ENCODE measurements at regions of chr3 and their contacts with region 1.

Region 1: DNA sequence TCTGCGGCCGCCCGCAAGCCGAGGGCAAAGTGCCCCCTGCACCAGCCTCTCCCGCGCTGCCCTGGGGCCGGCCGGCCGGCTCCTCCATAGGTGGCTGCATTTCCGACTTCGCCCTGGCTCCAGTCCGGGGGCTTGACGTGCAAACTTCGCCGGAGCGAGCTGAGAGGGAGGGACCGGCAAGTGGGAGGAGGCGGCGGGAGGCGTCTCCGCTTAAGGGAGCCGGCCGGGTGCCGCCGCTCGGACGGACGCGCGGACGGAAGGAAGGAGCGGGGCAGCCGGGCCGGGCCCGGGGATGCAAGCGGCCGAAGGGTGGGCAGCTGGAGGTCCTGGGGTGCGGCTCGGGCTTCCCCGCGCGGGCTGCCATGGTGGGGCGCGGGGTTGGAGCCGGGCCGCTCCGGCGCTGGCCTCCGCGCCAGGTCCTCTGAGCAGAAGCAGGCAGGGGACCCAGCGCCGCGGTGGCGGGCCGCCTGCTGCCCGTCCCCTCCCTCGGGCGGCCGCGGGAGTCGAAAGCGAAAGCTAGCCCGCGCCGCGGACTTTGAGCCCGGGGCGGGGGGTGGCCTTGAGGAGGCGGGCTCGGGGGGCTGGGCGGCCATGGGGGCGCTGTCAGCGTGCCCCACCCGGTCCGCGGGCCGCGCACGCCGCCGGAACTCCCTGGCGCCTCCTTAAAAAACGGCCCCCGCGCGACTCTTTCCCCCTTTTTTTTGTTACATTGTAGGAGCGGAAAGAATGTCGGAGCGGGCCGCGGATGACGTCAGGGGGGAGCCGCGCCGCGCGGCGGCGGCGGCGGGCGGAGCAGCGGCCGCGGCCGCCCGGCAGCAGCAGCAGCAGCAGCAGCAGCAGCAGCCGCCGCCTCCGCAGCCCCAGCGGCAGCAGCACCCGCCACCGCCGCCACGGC is at the start of gene SCAANT1:
- DNase-seq: peak; percentile 79
- ATAC-seq: peak; percentile 74
- H3K4me3 Mint-ChIP-seq: peak within 1 kb of the TSS; percentile 89
- H3K27ac Mint-ChIP-seq: peak within 1 kb of the TSS; percentile 92
- H3K4me1 Mint-ChIP-seq: peaks cover 47% of the 10 kb centered on the region
- H3K27me3 Mint-ChIP-seq: no peaks in the 10 kb centered on the region
- CTCF ChIP-seq: no peak
- total RNA-seq, gene SCAANT1: not detected in 2 replicates

Region 2: DNA sequence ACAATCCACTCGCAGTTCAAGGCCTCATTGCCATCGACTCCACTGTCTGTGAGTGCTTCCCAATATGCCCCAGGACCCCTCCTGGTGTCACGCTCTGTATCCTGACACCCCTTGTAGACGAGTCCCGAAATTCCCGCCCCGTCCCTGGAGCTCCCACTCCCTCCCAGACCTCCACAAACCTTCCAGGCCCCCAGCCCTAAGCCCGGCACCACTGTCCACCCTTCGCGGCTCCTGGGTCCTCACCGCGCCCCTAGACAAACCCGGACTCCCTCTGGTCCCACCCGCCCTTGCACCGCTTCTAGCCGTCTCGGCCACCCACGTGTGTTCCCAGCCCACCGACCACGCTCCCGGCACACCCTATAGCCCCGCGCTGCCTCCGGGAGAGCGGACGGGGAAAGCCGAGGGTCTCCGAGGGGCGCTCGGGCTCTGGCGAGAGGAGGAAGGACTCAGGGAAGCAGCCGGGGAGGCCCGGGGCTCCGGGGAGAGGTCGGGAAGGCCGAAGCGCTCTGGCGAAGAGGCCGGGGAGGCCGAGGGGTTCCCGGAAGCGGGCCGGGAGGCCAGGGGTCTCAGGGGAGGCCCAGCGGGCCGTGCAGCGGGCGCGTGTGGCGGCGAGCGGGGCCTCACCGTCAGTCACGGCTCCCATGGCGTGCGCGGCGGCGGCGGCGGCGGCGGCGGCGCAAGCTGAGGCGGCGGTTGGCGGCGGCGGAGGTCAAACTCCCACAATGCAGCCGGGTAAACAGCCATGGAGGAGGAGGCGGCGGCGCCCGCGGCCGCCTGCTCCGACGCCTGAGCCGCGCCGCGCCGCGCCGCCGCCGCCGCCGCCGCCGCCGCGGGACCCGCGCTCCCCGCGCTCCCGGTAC is 48.7 kb before region 1 on chr3 and contains the starts of genes ATXN7 and THOC7:
- CTCF ChIA-PET with region 1: no interaction called
- POLR2A ChIA-PET with region 1: interaction called, 5 read pairs
- intact Hi-C with region 1: loop called (anchors 1 kb)
- DNase-seq: peak; percentile 77
- ATAC-seq: peak; percentile 80
- H3K4me3 Mint-ChIP-seq: peak within 1 kb of the TSS; percentile 96
- H3K27ac Mint-ChIP-seq: peak within 1 kb of the TSS; percentile 94
- H3K4me1 Mint-ChIP-seq: peaks cover 50% of the 10 kb centered on the region
- H3K27me3 Mint-ChIP-seq: no peaks in the 10 kb centered on the region
- CTCF ChIP-seq: no peak
- total RNA-seq, gene ATXN7: 45.2 and 46.7 TPM in 2 replicates
- total RNA-seq, gene THOC7: 50.2 and 53.8 TPM in 2 replicates

Region 3: DNA sequence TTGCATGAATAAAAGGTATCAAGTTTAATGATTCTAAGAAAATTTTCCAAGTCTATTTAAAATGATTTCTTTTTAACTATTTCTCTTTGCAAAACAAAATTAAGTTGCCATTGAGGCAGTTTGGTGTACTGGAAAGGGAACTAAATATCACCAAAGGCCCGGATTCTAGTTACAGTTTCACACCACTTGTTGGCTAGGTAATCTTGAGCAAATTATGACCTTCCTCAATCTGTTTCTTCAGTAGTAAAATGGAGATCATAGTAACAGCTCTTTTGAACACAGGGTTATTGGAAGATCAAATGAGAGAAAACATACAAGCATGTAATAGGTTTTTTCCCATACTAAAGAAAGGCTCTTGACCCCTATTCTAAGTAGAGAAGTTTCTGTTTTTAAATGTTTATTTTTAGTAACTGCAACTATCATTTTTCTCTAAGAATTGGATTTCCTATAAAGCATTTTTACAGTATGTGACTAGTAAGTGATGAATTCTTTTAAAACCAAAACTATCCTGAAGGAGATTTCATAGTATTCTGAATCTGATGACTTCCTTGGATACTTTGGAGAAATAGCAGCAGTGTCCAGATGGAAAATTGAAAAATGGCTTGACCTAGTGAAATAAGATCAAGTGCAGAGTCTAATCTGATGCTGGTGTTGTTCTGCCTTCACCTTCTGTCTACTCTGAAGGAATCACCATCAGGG is 15.6 kb before region 1 on chr3:
- CTCF ChIA-PET with region 1: no interaction called
- POLR2A ChIA-PET with region 1: no interaction called
- intact Hi-C with region 1: loop called (anchors 2 kb)
- DNase-seq: no peak
- ATAC-seq: no peak
- H3K4me3 Mint-ChIP-seq: no peak overlapping the region
- H3K27ac Mint-ChIP-seq: no peak overlapping the region
- H3K4me1 Mint-ChIP-seq: peaks cover 48% of the 10 kb centered on the region
- H3K27me3 Mint-ChIP-seq: no peaks in the 10 kb centered on the region
- CTCF ChIP-seq: no peak

Region 4: DNA sequence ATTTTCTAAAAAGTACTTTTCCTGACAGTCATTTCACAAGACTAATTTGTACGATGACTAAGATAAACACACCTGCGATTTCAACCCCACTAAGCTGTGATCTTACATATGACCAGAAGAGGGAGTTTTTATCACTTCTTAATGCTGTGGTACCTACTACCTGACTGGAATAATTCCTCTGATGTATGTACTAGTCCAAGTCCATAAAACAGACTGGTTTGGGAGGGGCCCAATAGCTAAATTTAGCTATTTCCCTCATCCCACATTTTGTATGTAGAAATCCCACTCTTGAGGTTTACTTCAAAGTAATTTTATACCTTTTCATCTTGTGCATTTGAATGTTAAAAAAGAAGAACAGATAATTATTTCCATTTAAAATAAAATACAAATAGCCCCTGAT is 49.8 kb after region 1 on chr3:
- CTCF ChIA-PET with region 1: interaction called, 3 read pairs
- POLR2A ChIA-PET with region 1: interaction called, 3 read pairs
- intact Hi-C with region 1: loop called (anchors 1 kb)
- DNase-seq: no peak
- ATAC-seq: peak; percentile 86
- H3K4me3 Mint-ChIP-seq: no peak overlapping the region
- H3K27ac Mint-ChIP-seq: no peak overlapping the region
- H3K4me1 Mint-ChIP-seq: peaks cover 40% of the 10 kb centered on the region
- H3K27me3 Mint-ChIP-seq: no peaks in the 10 kb centered on the region
- CTCF ChIP-seq: no peak

Region 5: GRCh38 chr3:63993653-63994079 is 81.5 kb after region 1 on chr3:
- CTCF ChIA-PET with region 1: no interaction called
- POLR2A ChIA-PET with region 1: no interaction called
- intact Hi-C with region 1: loop called (anchors 1 kb)
- DNase-seq: peak; percentile 20
- ATAC-seq: peak; percentile 83
- H3K4me3 Mint-ChIP-seq: no peak overlapping the region
- H3K27ac Mint-ChIP-seq: no peak overlapping the region
- H3K4me1 Mint-ChIP-seq: no peaks in the 10 kb centered on the region
- H3K27me3 Mint-ChIP-seq: no peaks in the 10 kb centered on the region
- CTCF ChIP-seq: peak; percentile 36

Region 6: DNA sequence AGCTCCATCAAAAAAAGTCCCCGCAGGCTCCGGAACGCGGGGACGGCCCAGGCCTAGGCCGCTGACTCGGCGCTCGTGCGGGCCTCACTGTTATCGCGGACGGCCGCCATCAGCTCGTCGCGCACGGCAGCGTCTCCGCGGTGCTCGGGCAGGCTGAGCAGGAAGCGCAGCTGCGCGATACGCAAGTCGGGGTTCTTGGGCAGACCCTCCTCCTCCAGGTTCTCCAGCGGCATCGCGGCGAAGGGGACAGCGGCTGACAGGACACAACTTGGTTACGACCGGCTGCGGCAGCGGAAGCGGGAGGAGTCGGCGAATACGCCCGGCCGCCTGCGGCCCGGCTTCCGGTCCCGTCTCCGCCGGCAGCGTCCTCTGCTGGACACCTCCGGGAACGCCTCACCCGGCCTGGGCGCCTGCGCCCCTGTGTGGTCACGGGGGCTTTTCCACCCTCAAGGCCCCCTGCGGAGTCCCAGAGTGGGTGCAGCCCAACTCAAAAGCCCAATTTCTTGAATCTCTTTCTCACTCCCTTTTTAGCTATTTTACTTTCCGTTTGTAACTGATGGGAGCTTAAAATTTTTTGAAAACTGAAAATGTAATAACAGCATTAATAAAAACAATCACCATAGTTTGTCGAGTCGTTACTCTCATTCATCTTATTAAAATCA is 111.2 kb after region 1 on chr3 and contains the start of gene PSMD6:
- CTCF ChIA-PET with region 1: no interaction called
- POLR2A ChIA-PET with region 1: no interaction called
- intact Hi-C with region 1: loop called (anchors 1 kb)
- DNase-seq: peak; percentile 99
- ATAC-seq: peak; percentile 97
- H3K4me3 Mint-ChIP-seq: peak within 1 kb of the TSS; percentile 88
- H3K27ac Mint-ChIP-seq: peak within 1 kb of the TSS; percentile 81
- H3K4me1 Mint-ChIP-seq: peaks cover 27% of the 10 kb centered on the region
- H3K27me3 Mint-ChIP-seq: peaks cover 6% of the 10 kb centered on the region
- CTCF ChIP-seq: peak; percentile 97
- total RNA-seq, gene PSMD6: 88.9 and 91.4 TPM in 2 replicates

Region 7: GRCh38 chr3:64176461-64176996 is 264.4 kb after region 1 on chr3:
- CTCF ChIA-PET with region 1: no interaction called
- POLR2A ChIA-PET with region 1: no interaction called
- intact Hi-C with region 1: no loop called
- DNase-seq: no peak
- ATAC-seq: no peak
- H3K4me3 Mint-ChIP-seq: no peak overlapping the region
- H3K27ac Mint-ChIP-seq: no peak overlapping the region
- H3K4me1 Mint-ChIP-seq: no peaks in the 10 kb centered on the region
- H3K27me3 Mint-ChIP-seq: peaks cover 3% of the 10 kb centered on the region
- CTCF ChIP-seq: no peak